HEK293T (cell line): ENCODE measurements at regions of chr1 and their contacts with region 1.

Region 1: GRCh38 chr1:26181586-26182382 is 4.5 kb downstream of the CNKSR1 start:
- DNase-seq: no peak

Region 2: GRCh38 chr1:26169669-26170471 is 11.9 kb before region 1 on chr1 and contains the start of gene ZNF593:
- CTCF ChIA-PET with region 1: interaction called, 8 read pairs
- POLR2A ChIA-PET with region 1: interaction called, 15 read pairs
- DNase-seq: peak; percentile 99